Activated CD4-positive, alpha-beta T cell treated with anti-CD3 and anti-CD28 coated beads for 36 hours (primary cell): ENCODE measurements at regions of chr6 and their contacts with region 1.

Region 1: GRCh38 chr6:158644231-158645063 is at the start of gene DYNLT1:
- DNase-seq: peak; percentile 94
- ATAC-seq: peak; percentile 43
- H3K4me3 Mint-ChIP-seq: peak within 1 kb of the TSS; percentile 99
- H3K27ac Mint-ChIP-seq: peak within 1 kb of the TSS; percentile 99
- H3K4me1 Mint-ChIP-seq: peaks cover 77% of the 10 kb centered on the region
- H3K27me3 Mint-ChIP-seq: no peaks in the 10 kb centered on the region
- total RNA-seq, gene DYNLT1: 116 to 118 TPM

Region 2: GRCh38 chr6:157535339-157536222 is 1108.9 kb before region 1 on chr6:
- CTCF ChIA-PET with region 1: no interaction called
- POLR2A ChIA-PET with region 1: no interaction called
- intact Hi-C with region 1: loop called in 1 of 2 experiments (anchors 5 kb)
- DNase-seq: peak; percentile 49
- ATAC-seq: peak; percentile 88
- H3K4me3 Mint-ChIP-seq: peak overlapping the region; percentile 47
- H3K27ac Mint-ChIP-seq: peak overlapping the region; percentile 88
- H3K4me1 Mint-ChIP-seq: peaks cover 35% of the 10 kb centered on the region
- H3K27me3 Mint-ChIP-seq: peaks cover 9% of the 10 kb centered on the region

Region 3: GRCh38 chr6:158168040-158168289 is 476.5 kb before region 1 on chr6 and contains the start of gene SERAC1:
- CTCF ChIA-PET with region 1: no interaction called
- POLR2A ChIA-PET with region 1: no interaction called
- intact Hi-C with region 1: loop called in 1 of 2 experiments (anchors 2 kb)
- DNase-seq: no peak
- ATAC-seq: peak; percentile 30
- H3K4me3 Mint-ChIP-seq: peak within 1 kb of the TSS; percentile 89
- H3K27ac Mint-ChIP-seq: peak within 1 kb of the TSS; percentile 95
- H3K4me1 Mint-ChIP-seq: peaks cover 21% of the 10 kb centered on the region
- H3K27me3 Mint-ChIP-seq: no peaks in the 10 kb centered on the region
- total RNA-seq, gene SERAC1: 3.9 to 5.7 TPM

Region 4: DNA sequence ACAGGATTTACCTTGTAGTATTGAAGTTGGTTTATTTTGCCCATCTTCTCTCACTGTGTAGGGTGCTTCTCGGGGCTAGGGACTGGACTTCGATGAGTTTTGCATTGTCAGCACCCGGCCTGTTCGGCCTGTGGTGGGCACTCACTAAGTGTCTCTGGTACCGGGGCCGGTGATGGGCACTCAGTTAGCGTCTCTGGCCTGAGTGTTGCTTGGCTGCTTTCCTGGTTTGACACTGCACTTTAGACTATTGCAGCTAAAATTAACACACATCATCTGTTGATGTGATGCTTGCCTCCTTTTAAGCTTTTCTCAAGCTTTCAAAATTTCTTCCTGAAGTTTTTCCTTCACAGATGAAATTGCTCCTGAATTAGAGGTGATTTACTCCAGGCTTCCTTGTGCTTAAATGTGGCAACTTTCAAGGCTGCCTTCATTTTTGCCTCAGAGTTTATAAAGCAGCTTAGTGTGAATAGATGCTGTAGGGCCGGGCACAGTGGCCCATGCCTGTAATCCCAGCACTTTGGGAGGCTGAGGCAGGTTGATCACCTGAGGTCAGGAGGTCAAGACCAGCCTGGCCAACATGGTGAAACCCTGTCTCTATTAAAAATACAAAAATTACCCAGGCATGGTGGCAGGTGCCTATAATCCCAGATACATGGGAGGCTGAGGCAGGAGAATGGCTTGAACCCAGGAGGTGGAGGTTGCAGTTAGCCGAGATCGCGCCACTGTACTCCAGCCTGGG is 373.9 kb before region 1 on chr6:
- CTCF ChIA-PET with region 1: no interaction called
- POLR2A ChIA-PET with region 1: no interaction called
- intact Hi-C with region 1: loop called in 1 of 2 experiments (anchors 2 kb)
- DNase-seq: peak; percentile 45
- ATAC-seq: no peak
- H3K4me3 Mint-ChIP-seq: peak overlapping the region; percentile 15
- H3K27ac Mint-ChIP-seq: no peak overlapping the region
- H3K4me1 Mint-ChIP-seq: peaks cover 29% of the 10 kb centered on the region
- H3K27me3 Mint-ChIP-seq: no peaks in the 10 kb centered on the region

Region 5: DNA sequence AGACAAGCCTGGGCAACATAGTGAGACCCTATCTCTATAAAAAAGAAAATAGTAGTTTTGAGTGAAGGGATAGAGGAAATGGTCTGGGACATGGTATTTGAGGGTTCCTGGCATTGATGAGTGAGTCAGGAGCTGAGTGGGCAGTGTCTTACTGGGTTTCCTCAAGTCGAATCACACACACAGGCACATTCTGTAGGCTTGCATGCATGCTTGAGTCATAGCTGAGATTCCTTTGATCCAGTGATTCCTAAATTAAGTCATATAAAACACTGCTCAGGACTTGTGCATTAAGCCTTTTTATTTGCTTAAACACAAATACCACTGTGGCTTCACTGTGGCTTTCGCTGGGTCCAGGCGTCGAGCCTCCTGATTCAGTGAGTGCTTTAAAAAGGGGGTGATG is 156.4 kb before region 1 on chr6:
- CTCF ChIA-PET with region 1: no interaction called
- POLR2A ChIA-PET with region 1: no interaction called
- intact Hi-C with region 1: no loop called
- DNase-seq: peak; percentile 41
- ATAC-seq: peak; percentile 93
- H3K4me3 Mint-ChIP-seq: no peak overlapping the region
- H3K27ac Mint-ChIP-seq: no peak overlapping the region
- H3K4me1 Mint-ChIP-seq: peaks cover 11% of the 10 kb centered on the region
- H3K27me3 Mint-ChIP-seq: no peaks in the 10 kb centered on the region

Region 6: GRCh38 chr6:158853072-158853871 is 208.8 kb after region 1 on chr6:
- CTCF ChIA-PET with region 1: no interaction called
- POLR2A ChIA-PET with region 1: interaction called, 5 read pairs
- intact Hi-C with region 1: loop called (anchors 1 to 5 kb)
- DNase-seq: peak; percentile 94
- ATAC-seq: peak; percentile 83
- H3K4me3 Mint-ChIP-seq: no peak overlapping the region
- H3K27ac Mint-ChIP-seq: no peak overlapping the region
- H3K4me1 Mint-ChIP-seq: peaks cover 29% of the 10 kb centered on the region
- H3K27me3 Mint-ChIP-seq: no peaks in the 10 kb centered on the region

Region 7: GRCh38 chr6:159042003-159042825 is 397.8 kb after region 1 on chr6:
- CTCF ChIA-PET with region 1: no interaction called
- POLR2A ChIA-PET with region 1: interaction called, 5 read pairs
- intact Hi-C with region 1: loop called (anchors 1 to 5 kb)
- DNase-seq: peak; percentile 84
- ATAC-seq: peak; percentile 39
- H3K4me3 Mint-ChIP-seq: peak overlapping the region; percentile 87
- H3K27ac Mint-ChIP-seq: peak overlapping the region; percentile 97
- H3K4me1 Mint-ChIP-seq: peaks cover 71% of the 10 kb centered on the region
- H3K27me3 Mint-ChIP-seq: no peaks in the 10 kb centered on the region

Region 8: DNA sequence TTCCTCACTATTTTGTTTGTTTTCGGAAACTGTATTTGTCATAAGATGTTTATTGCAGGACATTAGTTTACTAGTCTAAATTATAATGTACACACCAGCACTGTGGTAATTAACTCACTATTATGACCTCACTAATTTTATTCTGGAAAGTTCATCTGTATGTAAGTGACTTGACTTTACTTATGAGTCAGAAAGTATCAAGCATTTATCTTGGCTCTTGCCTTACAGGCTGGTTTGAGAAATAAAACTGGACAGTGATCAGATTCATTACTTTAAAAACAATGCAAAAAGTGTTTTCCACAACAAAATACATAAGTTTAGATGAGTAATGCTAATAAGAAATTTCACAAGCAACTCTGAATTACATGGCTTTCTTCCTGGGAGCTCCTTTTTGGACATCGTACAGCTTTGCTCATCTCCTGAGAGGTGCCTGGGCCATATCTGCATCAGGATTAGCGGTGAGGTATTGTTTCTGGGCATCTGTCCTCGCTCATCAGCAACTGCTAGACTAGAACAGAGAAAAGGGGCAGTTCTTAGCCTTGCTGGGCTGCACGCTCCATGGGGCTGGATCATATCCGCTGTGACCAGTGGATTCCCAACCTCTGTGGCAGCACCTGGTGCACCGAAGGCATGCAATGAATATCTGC is 868.8 kb after region 1 on chr6:
- CTCF ChIA-PET with region 1: no interaction called
- POLR2A ChIA-PET with region 1: no interaction called
- intact Hi-C with region 1: no loop called
- DNase-seq: no peak
- ATAC-seq: no peak
- H3K4me3 Mint-ChIP-seq: no peak overlapping the region
- H3K27ac Mint-ChIP-seq: no peak overlapping the region
- H3K4me1 Mint-ChIP-seq: no peaks in the 10 kb centered on the region
- H3K27me3 Mint-ChIP-seq: peaks cover 19% of the 10 kb centered on the region